ENCODE measurements at regions of chr6 and their contacts with region 1.

Region 1: GRCh38 chr6:166936079-166936787 is 20.1 kb downstream of the RNASET2 start:
- DNase-seq: peak; percentile 54
- ATAC-seq: peak; percentile 95
- H3K4me3 ChIP-seq: no peak overlapping the region
- H3K4me3 Mint-ChIP-seq: peak overlapping the region; percentile 21
- H3K27ac ChIP-seq: peak overlapping the region in 1 of 2 donors; percentile 55
- H3K27ac Mint-ChIP-seq: peak overlapping the region; percentile 77
- H3K4me1 ChIP-seq: peaks cover 11 to 14% of the 10 kb centered on the region in 2 donors
- H3K4me1 Mint-ChIP-seq: peaks cover 32% of the 10 kb centered on the region
- H3K27me3 ChIP-seq: no peaks in the 10 kb centered on the region
- H3K27me3 Mint-ChIP-seq: no peaks in the 10 kb centered on the region
- CTCF ChIP-seq: no peak

Region 2: GRCh38 chr6:166862287-166862977 is 73.8 kb before region 1 on chr6:
- CTCF ChIA-PET with region 1: no interaction called
- POLR2A ChIA-PET with region 1: no interaction called
- intact Hi-C with region 1: loop called (anchors 5 kb)
- DNase-seq: peak; percentile 50
- ATAC-seq: peak; percentile 57
- H3K4me3 ChIP-seq: peak overlapping the region; percentile 23 to 70 (median 59)
- H3K4me3 Mint-ChIP-seq: peak overlapping the region; percentile 91
- H3K27ac ChIP-seq: no peak overlapping the region
- H3K27ac Mint-ChIP-seq: no peak overlapping the region
- H3K4me1 ChIP-seq: peaks cover 13 to 14% of the 10 kb centered on the region in 2 donors
- H3K4me1 Mint-ChIP-seq: peaks cover 7% of the 10 kb centered on the region
- H3K27me3 ChIP-seq: peaks cover 0 to 28% (median 15%) of the 10 kb centered on the region in 4 experiments
- H3K27me3 Mint-ChIP-seq: peaks cover 10% of the 10 kb centered on the region
- CTCF ChIP-seq: peak; percentile 12

Region 3: GRCh38 chr6:166921570-166921969 is 14.7 kb before region 1 on chr6:
- CTCF ChIA-PET with region 1: no interaction called
- POLR2A ChIA-PET with region 1: interaction called, 10 read pairs
- intact Hi-C with region 1: no loop called
- DNase-seq: no peak
- ATAC-seq: no peak
- H3K4me3 ChIP-seq: no peak overlapping the region
- H3K4me3 Mint-ChIP-seq: no peak overlapping the region
- H3K27ac ChIP-seq: no peak overlapping the region
- H3K27ac Mint-ChIP-seq: no peak overlapping the region
- H3K4me1 ChIP-seq: no peaks in the 10 kb centered on the region
- H3K4me1 Mint-ChIP-seq: peaks cover 3% of the 10 kb centered on the region
- H3K27me3 ChIP-seq: no peaks in the 10 kb centered on the region
- H3K27me3 Mint-ChIP-seq: no peaks in the 10 kb centered on the region
- CTCF ChIP-seq: no peak